Dendritic cell treated with granulocyte-macrophage colony-stimulating factor and Interleukin-4, amounts not matched to agents 40 ng/mL and 50 ng/mL, for 4 days (primary cell): ENCODE measurements at regions of chrX and their contacts with region 1.

Region 1: DNA sequence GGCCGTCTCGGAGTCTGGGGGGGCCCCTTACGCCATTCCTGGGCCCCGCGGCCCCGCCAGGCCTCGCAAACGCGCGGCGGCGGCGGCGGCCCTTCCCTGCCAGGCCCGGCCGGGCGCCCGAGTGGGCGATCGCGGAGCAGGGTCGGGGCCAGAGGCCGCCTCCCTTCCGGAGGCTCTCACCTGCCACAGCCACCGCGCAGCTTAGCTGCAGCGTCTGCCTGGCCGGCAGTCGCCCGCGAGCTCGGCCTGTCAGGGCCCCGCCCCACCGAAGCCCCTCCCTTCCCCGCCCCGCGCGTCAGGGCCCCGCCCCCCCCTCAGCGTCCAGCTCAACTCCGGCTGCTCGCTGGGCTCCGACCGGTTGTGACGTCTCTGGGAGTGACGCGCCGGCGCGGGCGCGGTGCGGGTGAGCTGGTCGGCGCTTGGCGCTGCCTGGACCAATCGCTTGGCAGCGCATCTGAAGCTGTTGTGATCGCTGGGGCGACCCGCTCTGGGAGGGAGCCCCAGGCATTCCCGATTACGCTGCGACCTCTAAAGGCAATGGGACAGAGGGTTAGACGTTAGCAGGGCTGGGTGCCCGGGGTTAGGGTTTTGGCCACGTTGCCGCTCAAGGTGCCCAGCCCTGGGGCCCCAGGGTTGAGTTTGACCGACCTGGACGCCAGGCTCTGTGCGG is at the start of gene SLC10A3:
- H3K4me3 Mint-ChIP-seq: peak within 1 kb of the TSS; percentile 82
- H3K27ac Mint-ChIP-seq: peak within 1 kb of the TSS; percentile 95
- H3K4me1 Mint-ChIP-seq: peaks cover 29% of the 10 kb centered on the region
- H3K27me3 Mint-ChIP-seq: peaks cover 3% of the 10 kb centered on the region

Region 2: DNA sequence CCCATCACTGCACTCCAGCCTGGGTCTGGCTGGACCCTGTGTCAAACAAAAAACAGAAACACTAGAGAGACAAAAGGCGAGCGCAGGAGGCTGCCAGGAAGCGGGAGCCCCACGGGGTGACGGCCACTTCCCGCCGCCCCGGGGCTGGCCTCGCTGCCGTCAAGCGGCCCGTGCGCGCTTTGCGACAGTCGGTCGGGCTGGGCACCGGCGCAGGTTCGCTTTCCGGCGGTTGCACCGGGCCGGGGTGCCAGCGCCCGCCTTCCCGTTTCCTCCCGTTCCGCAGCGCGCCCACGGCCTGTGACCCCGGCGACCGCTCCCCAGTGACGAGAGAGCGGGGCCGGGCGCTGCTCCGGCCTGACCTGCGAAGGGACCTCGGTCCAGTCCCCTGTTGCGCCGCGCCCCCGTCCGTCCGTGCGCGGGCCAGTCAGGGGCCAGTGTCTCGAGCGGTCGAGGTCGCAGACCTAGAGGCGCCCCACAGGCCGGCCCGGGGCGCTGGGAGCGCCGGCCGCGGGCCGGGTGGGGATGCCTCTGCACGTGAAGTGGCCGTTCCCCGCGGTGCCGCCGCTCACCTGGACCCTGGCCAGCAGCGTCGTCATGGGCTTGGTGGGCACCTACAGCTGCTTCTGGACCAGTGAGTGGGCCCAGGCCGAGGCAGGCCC is 79.1 kb before region 1 on chrX and contains the start of gene TAFAZZIN:
- intact Hi-C with region 1: no loop called
- H3K4me3 Mint-ChIP-seq: peak within 1 kb of the TSS; percentile 92
- H3K27ac Mint-ChIP-seq: peak within 1 kb of the TSS; percentile 89
- H3K4me1 Mint-ChIP-seq: peaks cover 32% of the 10 kb centered on the region
- H3K27me3 Mint-ChIP-seq: no peaks in the 10 kb centered on the region

Region 3: DNA sequence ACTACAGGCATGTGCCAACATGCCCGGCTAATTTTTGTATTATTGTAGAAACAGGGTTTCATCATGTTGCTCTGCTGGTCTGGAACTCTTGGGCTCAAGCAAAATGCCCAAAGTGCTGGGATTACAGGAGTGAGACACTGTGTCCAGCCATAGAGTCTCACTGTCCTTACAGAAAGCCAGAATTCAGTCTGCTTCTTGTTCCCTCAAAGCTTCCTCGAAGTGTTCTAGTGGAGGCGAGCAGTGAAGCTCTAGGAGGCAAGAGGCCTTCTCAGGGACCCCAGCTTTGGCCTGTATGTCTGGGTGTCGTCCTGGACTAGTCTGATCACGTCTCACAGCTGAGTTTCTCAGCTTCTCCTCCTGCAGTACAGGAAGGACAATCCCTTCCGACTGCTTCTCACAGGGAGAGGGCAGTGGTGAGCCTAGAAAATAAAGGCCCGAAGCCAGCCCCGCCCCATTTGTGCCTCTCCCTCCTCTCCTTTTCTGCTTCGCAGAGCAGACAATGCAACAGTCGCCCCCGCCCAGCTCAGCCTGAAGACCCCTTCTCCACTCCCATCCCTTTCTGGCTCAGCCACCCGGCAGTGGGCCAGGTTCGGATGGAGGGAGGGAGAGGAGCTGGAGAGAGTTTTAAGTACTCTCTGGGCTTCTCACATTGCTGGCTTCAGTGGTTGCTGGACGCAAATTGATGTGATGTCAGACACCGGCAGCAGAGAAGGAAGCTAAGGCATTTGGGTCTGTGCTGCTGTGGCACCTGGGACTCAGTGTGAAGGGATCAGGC is 36.5 kb after region 1 on chrX:
- intact Hi-C with region 1: loop called (anchors 5 kb)
- H3K4me3 Mint-ChIP-seq: peak overlapping the region; percentile 64
- H3K27ac Mint-ChIP-seq: peak overlapping the region; percentile 78
- H3K4me1 Mint-ChIP-seq: peaks cover 11% of the 10 kb centered on the region
- H3K27me3 Mint-ChIP-seq: no peaks in the 10 kb centered on the region